PC-3 (cell line): ENCODE measurements at regions of chr14 and their contacts with region 1.

Region 1: GRCh38 chr14:50778721-50779483 is 52.1 kb downstream of the NIN start:
- DNase-seq: no peak
- ATAC-seq: peak; percentile 6; the same call in 1 of the 2 replicates
- H3K4me3 ChIP-seq: no peak overlapping the region
- H3K27ac ChIP-seq: no peak overlapping the region
- H3K4me1 ChIP-seq: peaks cover 37% of the 10 kb centered on the region
- H3K27me3 ChIP-seq: no peaks in the 10 kb centered on the region
- CTCF ChIP-seq: no peak

Region 2: DNA sequence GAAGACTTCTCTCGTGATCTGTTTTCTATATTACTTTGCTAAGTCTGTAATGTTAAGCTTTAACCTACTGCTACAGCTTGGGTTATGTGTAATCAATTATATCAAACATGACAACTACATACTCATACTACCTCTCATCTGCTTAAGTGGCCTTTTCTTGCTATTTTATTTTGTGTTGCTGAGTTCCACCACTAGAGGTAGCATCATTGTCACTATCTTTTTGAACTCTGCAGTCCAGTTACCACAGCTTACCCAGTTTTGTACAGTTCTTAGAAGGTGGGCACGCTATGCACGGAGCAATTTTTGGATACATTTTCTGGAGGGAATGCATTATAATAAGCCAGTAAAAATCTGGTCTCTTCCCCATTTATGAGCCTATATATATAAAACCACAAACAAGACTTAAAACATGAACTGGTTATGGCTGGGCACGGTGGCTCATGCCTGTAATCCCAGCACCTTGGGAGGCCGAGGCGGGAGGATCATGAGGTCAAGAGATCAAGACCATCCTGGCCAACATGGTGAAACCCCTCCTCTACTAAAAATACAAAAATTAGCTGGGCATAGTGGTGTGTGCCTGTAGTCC is 159.3 kb before region 1 on chr14:
- CTCF ChIA-PET with region 1: interaction called, 17 read pairs
- POLR2A ChIA-PET with region 1: no interaction called
- intact Hi-C with region 1: loop called (anchors 1 kb)
- DNase-seq: peak; percentile 72
- ATAC-seq: peak; percentile 93
- H3K4me3 ChIP-seq: no peak overlapping the region
- H3K27ac ChIP-seq: no peak overlapping the region
- H3K4me1 ChIP-seq: peaks cover 8% of the 10 kb centered on the region
- H3K27me3 ChIP-seq: no peaks in the 10 kb centered on the region
- CTCF ChIP-seq: peak; percentile 89